ENCODE measurements at regions of chr9 and their contacts with region 1.

Region 1: GRCh38 chr9:70840266-70840665 is 281.2 kb downstream of the TRPM3 start:
- DNase-seq: no peak
- ATAC-seq: no peak
- H3K4me3 ChIP-seq: no peak overlapping the region
- H3K27ac ChIP-seq: no peak overlapping the region
- H3K4me1 ChIP-seq: no peaks in the 10 kb centered on the region
- H3K27me3 ChIP-seq: peaks cover 0 to 2% of the 10 kb centered on the region in 2 experiments; a peak in 1 of 4 replicates
- CTCF ChIP-seq: no peak
- EP300 ChIP-seq: no peak
- POLR2A ChIP-seq: no peak
- RAD21 ChIP-seq: no peak

Region 2: DNA sequence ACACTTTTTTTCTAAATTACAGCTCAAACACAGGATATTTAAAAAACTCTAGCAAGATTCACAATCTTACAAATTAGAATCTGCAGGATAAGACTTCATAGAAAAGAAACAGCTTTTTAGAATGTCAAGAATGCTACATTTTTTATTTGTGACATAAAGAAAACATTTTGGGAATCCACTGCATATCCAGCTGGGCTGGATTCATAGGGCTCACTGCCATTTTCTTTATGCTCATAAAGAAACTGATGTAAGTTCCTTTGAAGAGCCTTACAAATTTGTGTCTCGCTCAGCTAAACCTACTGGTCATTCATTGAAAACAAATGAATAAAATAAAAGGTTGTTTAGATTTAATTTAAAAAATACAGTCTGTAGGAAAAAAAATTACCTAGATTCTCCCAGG is 51.2 kb before region 1 on chr9:
- CTCF ChIA-PET with region 1: no interaction called
- POLR2A ChIA-PET with region 1: no interaction called
- RAD21 ChIA-PET with region 1: no interaction called
- SMC1A ChIA-PET with region 1: interaction called, 3 read pairs
- in situ Hi-C with region 1: no loop called
- intact Hi-C with region 1: loop called (anchors 10 kb)
- DNase-seq: no peak
- ATAC-seq: no peak
- H3K4me3 ChIP-seq: no peak overlapping the region
- H3K27ac ChIP-seq: no peak overlapping the region
- H3K4me1 ChIP-seq: no peaks in the 10 kb centered on the region
- H3K27me3 ChIP-seq: 0 out of 4 replicates have a peak, but pooled peaks cover 0 to 2% of the 10 kb centered on the region in 2 experiments
- CTCF ChIP-seq: no peak
- EP300 ChIP-seq: no peak
- POLR2A ChIP-seq: no peak
- RAD21 ChIP-seq: no peak

Region 3: GRCh38 chr9:70852711-70853240 is 12.5 kb after region 1 on chr9:
- CTCF ChIA-PET with region 1: no interaction called
- POLR2A ChIA-PET with region 1: no interaction called
- RAD21 ChIA-PET with region 1: no interaction called
- SMC1A ChIA-PET with region 1: no interaction called
- in situ Hi-C with region 1: no loop called
- intact Hi-C with region 1: no loop called
- DNase-seq: no peak
- ATAC-seq: no peak
- H3K4me3 ChIP-seq: no peak overlapping the region
- H3K27ac ChIP-seq: no peak overlapping the region
- H3K4me1 ChIP-seq: no peaks in the 10 kb centered on the region
- H3K27me3 ChIP-seq: no peaks in the 10 kb centered on the region; a peak in 1 of 4 replicates
- CTCF ChIP-seq: no peak
- EP300 ChIP-seq: no peak
- POLR2A ChIP-seq: no peak
- RAD21 ChIP-seq: no peak